ENCODE measurements at regions of chr16 and their contacts with region 1.

Region 1: DNA sequence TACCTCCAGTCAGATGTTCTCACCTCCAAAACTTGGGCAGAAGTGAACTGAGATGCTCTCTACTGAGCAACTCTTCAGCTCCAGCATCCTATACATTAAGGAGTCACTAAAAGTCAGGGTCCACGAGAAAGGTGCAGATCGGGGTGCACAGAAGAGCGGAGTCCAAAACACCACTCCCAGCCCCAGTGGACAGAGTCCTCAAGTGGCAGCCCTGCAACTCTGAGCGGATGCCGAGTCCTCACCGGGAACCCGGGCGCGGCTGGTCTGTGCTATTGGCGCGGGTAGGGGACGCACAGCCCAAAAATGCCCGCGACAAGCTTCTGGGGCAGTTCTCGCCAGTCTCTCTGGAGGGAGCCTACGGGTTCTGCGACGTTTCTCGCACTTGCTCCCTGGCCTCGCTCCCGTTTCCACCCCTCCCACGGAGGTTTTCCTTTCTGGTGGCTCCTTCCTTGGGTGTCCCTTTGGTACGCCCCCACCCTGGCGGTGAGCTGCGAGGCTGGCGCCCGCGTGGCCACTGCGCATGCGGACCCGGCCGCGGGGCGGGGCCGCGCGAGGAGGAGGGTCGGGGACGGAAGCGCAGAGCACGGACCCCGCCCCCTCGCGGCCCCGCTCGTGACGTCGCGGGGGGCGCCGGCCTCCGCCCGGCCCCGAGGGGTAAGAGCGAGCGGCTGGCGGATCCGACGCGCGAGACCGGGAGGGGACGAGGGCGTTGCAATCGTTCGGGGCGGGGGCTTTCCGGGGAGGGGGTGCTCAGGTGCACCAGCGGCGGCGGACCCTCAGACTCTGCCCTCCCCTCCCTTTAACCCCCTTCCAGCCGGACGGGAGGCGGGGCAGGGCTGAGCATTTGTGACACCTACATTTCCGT is at the start of gene TMEM219:
- DNase-seq: peak; percentile 91 to 95
- ATAC-seq: peak; percentile 98 to 99 (median 99)
- H3K4me3 ChIP-seq: peak within 1 kb of the TSS; percentile 75
- H3K27ac ChIP-seq: peak within 1 kb of the TSS; percentile 83
- H3K4me1 ChIP-seq: no peaks in the 10 kb centered on the region
- H3K27me3 ChIP-seq: no peaks in the 10 kb centered on the region
- CTCF ChIP-seq: peak; percentile 45
- total RNA-seq, gene TMEM219: 39.6 to 64.5 (median 50.3) TPM

Region 2: GRCh38 chr16:29848420-29849297 is 113.1 kb before region 1 on chr16:
- intact Hi-C with region 1: no loop called
- DNase-seq: peak; percentile 80 to 91
- ATAC-seq: peak; percentile 79 to 90 (median 84)
- H3K4me3 ChIP-seq: no peak overlapping the region
- H3K27ac ChIP-seq: no peak overlapping the region
- H3K4me1 ChIP-seq: no peaks in the 10 kb centered on the region
- H3K27me3 ChIP-seq: no peaks in the 10 kb centered on the region
- CTCF ChIP-seq: peak; percentile 86

Region 3: GRCh38 chr16:29926005-29926710 is 35.6 kb before region 1 on chr16 and contains the start of gene KCTD13:
- intact Hi-C with region 1: loop called in 1 of 2 experiments (anchors 5 kb)
- DNase-seq: peak; percentile 83 to 92
- ATAC-seq: peak; percentile 98 to 100 (median 99)
- H3K4me3 ChIP-seq: peak within 1 kb of the TSS; percentile 99
- H3K27ac ChIP-seq: peak within 1 kb of the TSS; percentile 90
- H3K4me1 ChIP-seq: peaks cover 27% of the 10 kb centered on the region
- H3K27me3 ChIP-seq: no peaks in the 10 kb centered on the region
- CTCF ChIP-seq: no peak
- total RNA-seq, gene KCTD13: 3.3 to 5.4 (median 4.1) TPM